HepG2 (cell line): ENCODE measurements at regions of chr1 and their contacts with region 1.

Region 1: GRCh38 chr1:43706598-43707495 is 489 bp upstream of the ST3GAL3 start:
- DNase-seq: peak; percentile 82
- ATAC-seq: peak; percentile 96
- H3K4me3 ChIP-seq: peak overlapping the region; percentile 64 to 96 (median 85)
- H3K27ac ChIP-seq: peak overlapping the region; percentile 76
- H3K4me1 ChIP-seq: peaks cover 30% of the 10 kb centered on the region
- H3K27me3 ChIP-seq: no peaks in the 10 kb centered on the region; a peak in 1 of 5 replicates
- CTCF ChIP-seq: no peak
- EP300 ChIP-seq: no peak
- POLR2A ChIP-seq: peak; percentile 95 to 99
- RAD21 ChIP-seq: no peak

Region 2: GRCh38 chr1:43946236-43947060 is 239.6 kb after region 1 on chr1 and contains the start of gene IPO13:
- CTCF ChIA-PET with region 1: no interaction called
- POLR2A ChIA-PET with region 1: interaction called, 4 read pairs
- in situ Hi-C with region 1: no loop called
- intact Hi-C with region 1: loop called (anchors 5 kb)
- DNase-seq: peak; percentile 92
- ATAC-seq: peak; percentile 92
- H3K4me3 ChIP-seq: peak within 1 kb of the TSS; percentile 69 to 90 (median 79)
- H3K27ac ChIP-seq: peak within 1 kb of the TSS; percentile 93
- H3K4me1 ChIP-seq: peaks cover 27% of the 10 kb centered on the region
- H3K27me3 ChIP-seq: no peaks in the 10 kb centered on the region; a peak in 1 of 5 replicates
- CTCF ChIP-seq: peak; percentile 99
- EP300 ChIP-seq: no peak
- POLR2A ChIP-seq: peak; percentile 76 to 87
- RAD21 ChIP-seq: peak; percentile 72
- total RNA-seq, gene IPO13: 14.3 and 15.6 TPM in 2 replicates